Activated naive CD4-positive, alpha-beta T cell treated with anti-CD3 and anti-CD28 coated beads for 36 hours (primary cell): ENCODE measurements at regions of chr14 and their contacts with region 1.

Region 1: DNA sequence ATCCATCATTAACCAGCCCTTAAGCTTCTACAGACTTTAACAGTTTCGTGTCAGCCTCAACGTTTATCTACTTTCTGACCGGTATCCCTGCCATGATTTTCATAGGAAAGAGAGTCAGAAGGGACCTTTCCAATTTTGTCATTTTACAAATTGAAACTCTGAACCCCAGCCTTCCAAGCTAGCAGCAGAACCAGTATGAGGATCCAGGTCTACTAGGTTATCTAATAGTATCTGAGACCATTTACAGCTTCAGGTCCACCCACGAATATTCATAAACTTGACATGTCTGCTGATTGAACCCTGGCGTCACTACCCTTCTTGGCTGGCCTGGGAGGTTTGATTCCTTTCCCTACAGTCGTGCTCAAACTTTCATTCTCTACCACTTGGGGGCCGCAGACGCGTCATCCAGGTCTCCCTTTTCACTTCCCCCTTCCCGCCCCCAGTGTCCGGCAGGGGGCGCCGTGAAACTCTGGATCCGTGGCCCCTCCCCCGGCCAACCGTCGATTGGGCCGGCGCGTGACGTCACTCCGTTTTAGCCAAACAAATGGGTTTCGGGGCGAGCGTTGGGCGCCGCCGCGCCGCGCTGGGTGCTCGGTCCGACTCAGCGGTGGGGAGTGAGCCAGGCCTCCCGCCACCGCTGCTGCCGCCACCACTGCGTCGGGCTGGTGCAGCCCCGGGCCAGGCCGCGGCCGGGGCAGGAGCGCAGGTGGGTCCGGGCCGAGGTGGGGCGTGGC is at the start of gene FBXO34:
- DNase-seq: peak; percentile 99
- H3K4me3 Mint-ChIP-seq: peak within 1 kb of the TSS; percentile 86
- H3K27ac Mint-ChIP-seq: peak within 1 kb of the TSS; percentile 88
- H3K4me1 Mint-ChIP-seq: peaks cover 43% of the 10 kb centered on the region
- H3K27me3 Mint-ChIP-seq: no peaks in the 10 kb centered on the region
- total RNA-seq, gene FBXO34: 17.4 to 17.7 TPM

Region 2: GRCh38 chr14:54509546-54510501 is 761.2 kb before region 1 on chr14 and contains the start of gene CGRRF1:
- CTCF ChIA-PET with region 1: no interaction called
- intact Hi-C with region 1: loop called (anchors 10 kb)
- DNase-seq: peak; percentile 98
- H3K4me3 Mint-ChIP-seq: peak within 1 kb of the TSS; percentile 86
- H3K27ac Mint-ChIP-seq: peak within 1 kb of the TSS; percentile 52
- H3K4me1 Mint-ChIP-seq: peaks cover 41% of the 10 kb centered on the region
- H3K27me3 Mint-ChIP-seq: no peaks in the 10 kb centered on the region
- total RNA-seq, gene CGRRF1: 9.2 to 9.7 TPM

Region 3: DNA sequence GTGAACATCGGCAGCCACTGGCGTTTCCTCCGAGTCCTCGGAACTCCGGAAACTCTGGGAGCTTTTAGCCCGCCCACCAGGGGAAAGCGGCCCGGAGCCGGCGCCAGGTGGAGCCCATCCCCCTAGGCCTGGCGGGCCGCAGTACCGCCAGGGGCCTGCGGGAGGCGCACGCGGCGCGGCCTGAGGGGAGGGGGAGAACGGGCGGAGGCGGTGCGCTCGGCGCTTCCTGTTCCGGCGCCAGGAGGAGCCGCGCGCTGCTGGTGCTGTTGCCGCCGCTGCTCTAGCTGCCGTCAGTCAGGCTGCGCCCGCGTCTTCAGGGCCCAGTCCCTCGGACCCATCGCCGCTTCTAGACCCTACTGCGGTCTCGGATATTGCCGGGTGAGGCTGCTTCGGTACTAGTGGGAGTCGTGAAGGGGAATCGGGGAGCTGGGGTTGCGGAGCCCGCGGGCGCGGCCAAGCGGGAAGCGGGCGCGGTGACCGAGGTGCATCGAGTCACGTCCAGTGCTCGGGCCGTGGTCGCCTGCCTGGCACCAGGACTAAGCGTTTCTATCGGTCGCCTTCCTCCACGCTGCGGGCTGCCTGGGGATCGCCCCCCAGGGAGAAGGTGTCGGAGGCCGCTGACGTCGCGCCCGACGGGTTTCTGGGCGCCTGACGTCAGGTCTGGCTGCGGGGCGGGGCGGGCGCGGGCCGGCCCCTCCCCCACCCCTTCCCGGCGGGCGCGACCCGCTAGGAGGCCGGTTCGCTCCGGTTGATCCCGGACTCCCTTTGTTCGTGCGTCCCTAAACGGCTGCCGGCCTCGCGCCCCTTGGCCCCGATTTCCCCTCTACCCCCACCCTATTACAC is 219.4 kb before region 1 on chr14 and contains the start of gene MAPK1IP1L:
- CTCF ChIA-PET with region 1: no interaction called
- intact Hi-C with region 1: loop called (anchors 1 kb)
- DNase-seq: peak; percentile 90
- H3K4me3 Mint-ChIP-seq: peak within 1 kb of the TSS; percentile 86
- H3K27ac Mint-ChIP-seq: peak within 1 kb of the TSS; percentile 95
- H3K4me1 Mint-ChIP-seq: peaks cover 42% of the 10 kb centered on the region
- H3K27me3 Mint-ChIP-seq: no peaks in the 10 kb centered on the region
- total RNA-seq, gene MAPK1IP1L: 78.2 to 83.4 TPM

Region 4: DNA sequence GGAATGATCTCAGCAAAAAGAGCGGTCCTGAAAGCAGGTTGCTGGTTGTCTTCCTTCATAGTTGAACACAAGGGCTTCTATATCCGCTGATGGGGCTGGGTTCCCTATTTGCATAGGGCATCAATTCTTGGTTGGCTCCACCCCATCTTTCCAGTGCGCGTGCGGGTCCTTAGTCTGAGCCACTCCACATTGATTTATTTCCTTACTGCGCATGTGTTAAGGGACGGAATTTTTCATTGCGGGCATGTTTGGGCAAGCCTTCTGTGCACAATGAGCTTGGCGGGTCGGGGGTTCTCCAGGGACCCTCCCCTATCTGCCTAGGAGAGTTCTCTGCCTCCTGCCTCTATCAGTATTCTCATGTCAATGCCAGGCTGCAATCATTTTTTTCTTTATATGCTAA is 58.4 kb before region 1 on chr14:
- CTCF ChIA-PET with region 1: interaction called, 6 read pairs
- intact Hi-C with region 1: loop called (anchors 1 kb)
- DNase-seq: no peak
- H3K4me3 Mint-ChIP-seq: no peak overlapping the region
- H3K27ac Mint-ChIP-seq: no peak overlapping the region
- H3K4me1 Mint-ChIP-seq: peaks cover 4% of the 10 kb centered on the region
- H3K27me3 Mint-ChIP-seq: no peaks in the 10 kb centered on the region

Region 5: GRCh38 chr14:55327179-55327578 is 56.2 kb after region 1 on chr14:
- CTCF ChIA-PET with region 1: interaction called, 6 read pairs
- intact Hi-C with region 1: loop called (anchors 1 kb)
- DNase-seq: peak; percentile 16
- H3K4me3 Mint-ChIP-seq: no peak overlapping the region
- H3K27ac Mint-ChIP-seq: peak overlapping the region; percentile 42
- H3K4me1 Mint-ChIP-seq: peaks cover 65% of the 10 kb centered on the region
- H3K27me3 Mint-ChIP-seq: no peaks in the 10 kb centered on the region

Region 6: GRCh38 chr14:55354500-55354899 is 83.5 kb after region 1 on chr14:
- CTCF ChIA-PET with region 1: interaction called, 131 read pairs
- intact Hi-C with region 1: loop called (anchors 1 kb)
- DNase-seq: peak; percentile 80
- H3K4me3 Mint-ChIP-seq: peak overlapping the region; percentile 20
- H3K27ac Mint-ChIP-seq: peak overlapping the region; percentile 74
- H3K4me1 Mint-ChIP-seq: peaks cover 21% of the 10 kb centered on the region
- H3K27me3 Mint-ChIP-seq: no peaks in the 10 kb centered on the region

Region 7: DNA sequence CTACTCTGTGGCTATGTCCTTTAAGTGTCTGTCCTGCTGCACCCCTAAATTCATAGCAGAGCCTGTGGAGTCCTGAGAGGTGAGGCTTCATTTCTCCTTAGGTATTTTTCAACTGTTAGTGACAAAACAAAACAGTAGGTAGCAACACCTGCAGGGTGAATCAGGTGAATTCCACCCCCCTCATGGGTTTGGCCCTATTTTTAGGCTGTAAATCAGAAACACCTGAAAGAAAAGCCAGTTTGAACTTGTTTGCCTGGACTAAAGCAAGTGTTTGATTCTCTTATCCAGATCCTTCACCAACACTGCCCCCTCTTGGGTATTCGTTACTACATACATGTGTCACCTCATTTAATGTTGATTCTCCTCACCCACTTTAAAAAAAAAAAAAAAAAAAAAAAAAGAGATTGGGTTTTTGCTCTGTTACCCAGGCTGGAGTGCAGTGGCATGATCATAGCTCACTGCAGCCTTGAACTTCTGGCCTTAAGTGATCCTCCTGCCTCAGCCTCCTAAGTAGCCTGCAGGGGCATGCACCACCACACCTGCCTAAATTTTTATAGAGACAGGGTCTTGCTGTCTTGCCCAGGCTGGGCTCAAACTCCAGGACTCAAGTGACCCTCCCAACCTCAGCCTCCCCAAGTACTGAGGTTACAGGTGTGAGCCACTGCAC is 159.2 kb after region 1 on chr14:
- CTCF ChIA-PET with region 1: interaction called, 12 read pairs
- intact Hi-C with region 1: loop called (anchors 1 kb)
- DNase-seq: peak; percentile 71
- H3K4me3 Mint-ChIP-seq: no peak overlapping the region
- H3K27ac Mint-ChIP-seq: peak overlapping the region; percentile 62
- H3K4me1 Mint-ChIP-seq: peaks cover 29% of the 10 kb centered on the region
- H3K27me3 Mint-ChIP-seq: no peaks in the 10 kb centered on the region

Region 8: GRCh38 chr14:55624913-55625312 is 353.9 kb after region 1 on chr14:
- CTCF ChIA-PET with region 1: no interaction called
- intact Hi-C with region 1: no loop called
- DNase-seq: no peak
- H3K4me3 Mint-ChIP-seq: no peak overlapping the region
- H3K27ac Mint-ChIP-seq: no peak overlapping the region
- H3K4me1 Mint-ChIP-seq: no peaks in the 10 kb centered on the region
- H3K27me3 Mint-ChIP-seq: no peaks in the 10 kb centered on the region